Activated CD4-positive, alpha-beta memory T cell treated with anti-CD3 and anti-CD28 coated beads for 36 hours (primary cell): ENCODE measurements at regions of chr3 and their contacts with region 1.

Region 1: GRCh38 chr3:197749601-197750395 is at the start of gene FYTTD1:
- DNase-seq: peak; percentile 90
- H3K4me3 Mint-ChIP-seq: peak within 1 kb of the TSS; percentile 98
- H3K27ac Mint-ChIP-seq: peak within 1 kb of the TSS; percentile 92
- H3K4me1 Mint-ChIP-seq: peaks cover 33% of the 10 kb centered on the region
- H3K27me3 Mint-ChIP-seq: no peaks in the 10 kb centered on the region
- total RNA-seq, gene FYTTD1: 35.5 to 39.9 TPM

Region 2: DNA sequence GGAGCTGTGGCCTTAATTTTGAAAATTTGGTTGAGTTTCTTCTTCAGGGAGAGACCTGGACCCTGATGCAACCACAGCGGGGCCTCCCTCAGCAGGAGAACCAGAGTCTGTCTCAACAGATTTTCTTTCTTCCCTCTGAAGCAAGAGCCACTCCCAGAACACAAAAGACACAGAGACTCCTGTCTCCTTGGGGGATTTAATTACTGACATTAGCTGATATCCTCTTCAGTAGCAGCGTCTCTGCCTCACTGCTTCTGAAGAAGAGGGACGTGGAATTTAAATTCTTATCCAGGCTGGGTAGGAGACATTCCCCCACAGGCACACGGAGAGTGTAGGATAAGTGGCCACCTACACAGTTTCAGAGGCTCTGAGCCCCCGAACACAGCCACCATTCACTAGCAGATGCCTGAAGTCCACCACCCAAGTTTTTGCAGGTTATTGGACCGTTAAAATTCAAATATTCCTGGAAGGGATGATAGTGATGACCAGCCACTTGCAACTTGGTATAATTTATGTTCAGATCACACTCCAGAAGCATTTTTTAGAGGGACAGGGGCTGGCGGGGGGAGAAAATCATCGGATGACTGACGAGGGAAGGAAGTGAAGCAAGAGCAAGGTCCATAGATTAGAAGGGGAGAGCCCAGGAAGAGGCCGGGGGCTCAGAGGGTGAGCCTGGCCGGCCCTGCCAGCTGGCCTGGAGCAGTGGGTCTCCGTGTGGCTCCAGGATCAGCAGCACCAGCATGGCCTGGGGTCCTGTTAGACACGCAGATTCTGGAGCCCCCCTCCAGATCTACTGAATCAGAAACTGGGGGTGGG is 303.7 kb before region 1 on chr3:
- CTCF ChIA-PET with region 1: no interaction called
- POLR2A ChIA-PET with region 1: no interaction called
- intact Hi-C with region 1: no loop called
- DNase-seq: no peak
- H3K4me3 Mint-ChIP-seq: no peak overlapping the region
- H3K27ac Mint-ChIP-seq: no peak overlapping the region
- H3K4me1 Mint-ChIP-seq: no peaks in the 10 kb centered on the region
- H3K27me3 Mint-ChIP-seq: peaks cover 14% of the 10 kb centered on the region

Region 3: GRCh38 chr3:197801891-197802778 is 52.3 kb after region 1 on chr3:
- CTCF ChIA-PET with region 1: no interaction called
- POLR2A ChIA-PET with region 1: no interaction called
- intact Hi-C with region 1: loop called (anchors 2 kb)
- DNase-seq: peak; percentile 53
- H3K4me3 Mint-ChIP-seq: no peak overlapping the region
- H3K27ac Mint-ChIP-seq: peak overlapping the region; percentile 79
- H3K4me1 Mint-ChIP-seq: peaks cover 48% of the 10 kb centered on the region
- H3K27me3 Mint-ChIP-seq: no peaks in the 10 kb centered on the region